ENCODE measurements at regions of chr4 and their contacts with region 1.

Region 1: GRCh38 chr4:101169044-101170014 is 178.0 kb downstream of the PPP3CA start:
- DNase-seq: peak; percentile 82
- H3K4me3 ChIP-seq: no peak overlapping the region
- H3K27ac ChIP-seq: no peak overlapping the region
- H3K4me1 ChIP-seq: peaks cover 49% of the 10 kb centered on the region
- H3K27me3 ChIP-seq: no peaks in the 10 kb centered on the region
- CTCF ChIP-seq: peak; percentile 83

Region 2: DNA sequence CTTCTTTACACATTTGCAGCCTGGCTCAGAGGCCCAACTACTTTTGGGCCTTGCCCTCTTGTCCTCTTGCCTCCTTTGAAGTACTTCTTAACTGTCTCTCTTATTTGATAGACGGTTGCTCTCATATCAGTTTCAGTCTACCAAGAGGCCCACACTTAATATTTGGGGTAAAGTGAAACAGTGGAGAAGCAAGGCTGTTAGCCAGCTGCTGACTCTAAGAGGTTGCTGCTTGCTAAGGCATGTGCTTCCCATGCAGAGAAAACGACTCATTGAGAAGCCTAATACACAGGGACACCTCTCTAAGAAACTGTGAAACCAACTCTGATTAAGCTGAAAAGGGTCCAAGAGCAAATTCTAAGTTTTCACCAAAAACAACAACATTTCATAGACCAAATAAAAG is 83.4 kb after region 1 on chr4:
- CTCF ChIA-PET with region 1: no interaction called
- POLR2A ChIA-PET with region 1: no interaction called
- intact Hi-C with region 1: no loop called
- DNase-seq: no peak
- H3K4me3 ChIP-seq: no peak overlapping the region
- H3K27ac ChIP-seq: peak overlapping the region; percentile 1
- H3K4me1 ChIP-seq: peaks cover 36% of the 10 kb centered on the region
- H3K27me3 ChIP-seq: no peaks in the 10 kb centered on the region
- CTCF ChIP-seq: no peak

Region 3: GRCh38 chr4:101321481-101322042 is 152.2 kb after region 1 on chr4:
- CTCF ChIA-PET with region 1: no interaction called
- POLR2A ChIA-PET with region 1: no interaction called
- intact Hi-C with region 1: loop called (anchors 5 kb)
- DNase-seq: no peak
- H3K4me3 ChIP-seq: no peak overlapping the region
- H3K27ac ChIP-seq: peak overlapping the region; percentile 90
- H3K4me1 ChIP-seq: peaks cover 60% of the 10 kb centered on the region
- H3K27me3 ChIP-seq: no peaks in the 10 kb centered on the region
- CTCF ChIP-seq: no peak

Region 4: GRCh38 chr4:101347557-101348366 is 178.4 kb after region 1 on chr4:
- CTCF ChIA-PET with region 1: no interaction called
- POLR2A ChIA-PET with region 1: no interaction called
- intact Hi-C with region 1: loop called (anchors 5 kb)
- DNase-seq: peak; percentile 98
- H3K4me3 ChIP-seq: peak overlapping the region; percentile 98
- H3K27ac ChIP-seq: peak overlapping the region; percentile 91
- H3K4me1 ChIP-seq: peaks cover 31% of the 10 kb centered on the region
- H3K27me3 ChIP-seq: no peaks in the 10 kb centered on the region
- CTCF ChIP-seq: 0 out of 2 replicates have a peak, but pooled peaks have one; percentile 14

Region 5: DNA sequence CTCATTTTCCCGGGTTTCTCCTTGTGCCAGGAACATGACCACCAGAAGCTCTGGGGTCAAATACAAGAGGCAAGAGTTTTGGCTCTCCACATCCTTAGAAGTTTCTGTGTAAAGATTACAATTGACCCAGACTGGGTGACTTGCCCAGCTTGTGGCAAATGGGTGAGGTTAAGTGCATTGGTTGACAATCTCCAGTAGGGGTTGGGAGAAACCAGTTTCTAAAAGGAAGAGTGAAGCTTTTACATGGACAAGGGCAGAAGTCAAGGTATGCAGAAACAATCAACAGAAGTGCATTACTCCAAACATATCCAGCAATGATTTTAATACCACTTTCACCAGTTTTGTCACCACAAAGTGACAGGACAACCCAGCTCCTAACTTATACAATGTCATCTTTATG is 1086.1 kb after region 1 on chr4:
- CTCF ChIA-PET with region 1: no interaction called
- POLR2A ChIA-PET with region 1: no interaction called
- intact Hi-C with region 1: loop called (anchors 5 kb)
- DNase-seq: no peak
- H3K4me3 ChIP-seq: no peak overlapping the region
- H3K27ac ChIP-seq: no peak overlapping the region
- H3K4me1 ChIP-seq: no peaks in the 10 kb centered on the region
- H3K27me3 ChIP-seq: no peaks in the 10 kb centered on the region
- CTCF ChIP-seq: no peak